Thyroid gland (tissue), 4 donors: ENCODE measurements at regions of chr14 and their contacts with region 1.

Region 1: DNA sequence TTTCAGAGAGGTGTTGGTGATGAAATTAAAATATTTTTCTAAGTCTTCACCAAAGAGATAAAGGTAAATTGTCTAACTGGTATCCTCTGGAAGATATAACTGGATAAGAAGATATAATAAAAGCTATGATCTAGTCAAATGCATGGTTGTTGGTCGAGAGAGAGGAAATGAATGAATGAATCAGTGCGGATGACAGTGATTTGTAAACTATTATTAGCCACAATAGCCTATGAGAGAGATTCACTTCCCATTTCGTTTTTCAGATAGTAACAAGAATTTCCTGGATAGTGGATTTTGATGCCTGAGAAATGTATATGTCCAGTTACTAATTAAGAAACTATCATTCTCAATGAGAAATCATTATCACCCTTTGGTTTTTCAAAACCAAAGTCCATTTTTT is 63.1 kb downstream of the HEATR5A start:
- DNase-seq: no peak
- H3K4me3 ChIP-seq: no peak overlapping the region
- H3K27ac ChIP-seq: no peak overlapping the region
- H3K4me1 ChIP-seq: no peaks in the 10 kb centered on the region
- H3K27me3 ChIP-seq: no peaks in the 10 kb centered on the region
- CTCF ChIP-seq: no peak
- POLR2A ChIP-seq: no peak

Region 2: GRCh38 chr14:30988509-30988908 is 368.8 kb before region 1 on chr14:
- intact Hi-C with region 1: loop called (anchors 10 kb)
- DNase-seq: no peak
- H3K4me3 ChIP-seq: no peak overlapping the region
- H3K27ac ChIP-seq: no peak overlapping the region
- H3K4me1 ChIP-seq: peaks cover 0 to 18% of the 10 kb centered on the region in 2 donors
- H3K27me3 ChIP-seq: no peaks in the 10 kb centered on the region
- CTCF ChIP-seq: no peak
- POLR2A ChIP-seq: no peak

Region 3: DNA sequence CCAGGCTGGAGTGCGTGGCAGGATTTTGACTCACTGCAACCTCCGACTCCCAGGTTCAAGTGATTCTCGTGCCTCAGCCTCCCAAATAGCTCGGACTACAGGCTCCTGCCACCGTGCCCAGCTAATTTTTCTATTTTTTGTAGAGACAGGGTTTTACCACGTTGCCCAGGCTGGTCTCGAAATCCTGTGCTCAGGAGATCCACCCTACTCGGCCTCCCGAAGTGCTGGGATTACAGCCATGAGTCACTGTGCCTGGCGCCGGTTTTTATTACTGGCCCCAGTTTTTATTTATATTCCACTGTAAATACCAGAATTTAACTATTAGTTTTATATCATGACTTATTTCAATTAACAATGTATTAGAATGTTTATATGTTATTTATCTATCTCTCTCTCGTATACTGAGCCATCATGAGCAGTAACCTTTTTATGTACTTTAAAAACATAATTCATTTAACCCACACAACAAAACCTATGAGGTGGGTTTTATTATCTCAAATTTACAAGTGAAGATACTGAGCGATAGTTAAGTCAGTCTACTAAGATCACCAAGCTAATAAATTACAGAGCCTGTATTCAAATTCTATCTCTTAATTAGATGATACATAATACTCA is 197.5 kb before region 1 on chr14:
- intact Hi-C with region 1: loop called (anchors 10 kb)
- DNase-seq: no peak
- H3K4me3 ChIP-seq: no peak overlapping the region
- H3K27ac ChIP-seq: no peak overlapping the region
- H3K4me1 ChIP-seq: peaks cover 7 to 15% of the 10 kb centered on the region in 2 donors
- H3K27me3 ChIP-seq: no peaks in the 10 kb centered on the region
- CTCF ChIP-seq: no peak
- POLR2A ChIP-seq: no peak

Region 4: GRCh38 chr14:31207755-31208545 is 149.3 kb before region 1 on chr14 and contains the start of gene HECTD1:
- intact Hi-C with region 1: loop called (anchors 10 kb)
- DNase-seq: peak; percentile 91 to 93
- H3K4me3 ChIP-seq: peak within 1 kb of the TSS; percentile 62 to 75 (median 74)
- H3K27ac ChIP-seq: peak within 1 kb of the TSS; percentile 88 to 100 (median 100)
- H3K4me1 ChIP-seq: peaks cover 11 to 20% of the 10 kb centered on the region in 2 donors
- H3K27me3 ChIP-seq: no peaks in the 10 kb centered on the region
- CTCF ChIP-seq: peak in 5 of 6 experiments; percentile 35 to 97 (median 95)
- POLR2A ChIP-seq: peak in 1 of 2 donors; percentile 73
- total RNA-seq, gene HECTD1: 252 to 382 (median 289) TPM

Region 5: GRCh38 chr14:31219169-31219568 is 138.1 kb before region 1 on chr14:
- intact Hi-C with region 1: no loop called
- DNase-seq: no peak
- H3K4me3 ChIP-seq: no peak overlapping the region
- H3K27ac ChIP-seq: no peak overlapping the region
- H3K4me1 ChIP-seq: no peaks in the 10 kb centered on the region
- H3K27me3 ChIP-seq: no peaks in the 10 kb centered on the region
- CTCF ChIP-seq: no peak
- POLR2A ChIP-seq: no peak

Region 6: GRCh38 chr14:31419967-31420318 is 62.7 kb after region 1 on chr14:
- intact Hi-C with region 1: no loop called
- DNase-seq: peak; percentile 83 to 87
- H3K4me3 ChIP-seq: peak overlapping the region in 2 of 3 donors; percentile 80 to 92
- H3K27ac ChIP-seq: peak overlapping the region; percentile 38 to 79 (median 72)
- H3K4me1 ChIP-seq: peaks cover 11 to 13% of the 10 kb centered on the region in 2 donors
- H3K27me3 ChIP-seq: no peaks in the 10 kb centered on the region
- CTCF ChIP-seq: no peak
- POLR2A ChIP-seq: no peak